K562 (cell line): ENCODE measurements at regions of chr2 and their contacts with region 1.

Region 1: DNA sequence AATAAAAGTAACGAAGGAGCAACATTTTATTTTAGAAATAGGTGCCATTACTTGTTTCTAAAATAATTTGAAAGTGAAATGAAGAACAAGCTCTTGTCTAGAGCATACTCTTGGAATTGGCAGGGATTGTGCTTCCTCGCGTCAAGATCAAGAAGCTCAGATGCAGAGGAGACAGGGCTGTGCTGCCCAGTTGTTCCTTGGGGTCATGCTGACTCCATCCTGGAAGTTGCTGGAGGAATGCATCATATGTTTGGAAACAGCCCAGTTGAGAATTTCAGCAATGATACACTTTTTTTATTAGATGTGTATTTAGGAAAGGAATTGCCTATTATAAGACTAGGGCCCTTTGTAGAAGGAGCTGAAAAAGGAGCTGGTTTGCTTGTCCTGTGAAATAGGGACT is 17.2 kb downstream of the LTBP1 start:
- DNase-seq: no peak
- ATAC-seq: no peak
- H3K4me3 ChIP-seq: no peak overlapping the region
- H3K27ac ChIP-seq: no peak overlapping the region
- H3K4me1 ChIP-seq: peaks cover 6 to 17% of the 10 kb centered on the region in 2 experiments; a peak in 4 of 5 replicates
- H3K27me3 ChIP-seq: no peaks in the 10 kb centered on the region
- CTCF ChIP-seq: no peak
- EP300 ChIP-seq: no peak
- POLR2A ChIP-seq: no peak
- RAD21 ChIP-seq: no peak

Region 2: GRCh38 chr2:33008716-33009115 is 44.8 kb after region 1 on chr2:
- CTCF ChIA-PET with region 1: no interaction called
- POLR2A ChIA-PET with region 1: no interaction called
- in situ Hi-C with region 1: no loop called
- intact Hi-C with region 1: loop called (anchors 1 kb)
- DNase-seq: no peak
- ATAC-seq: peak; percentile 32
- H3K4me3 ChIP-seq: no peak overlapping the region
- H3K27ac ChIP-seq: no peak overlapping the region
- H3K4me1 ChIP-seq: no peaks in the 10 kb centered on the region; a peak in 3 of 5 replicates
- H3K27me3 ChIP-seq: no peaks in the 10 kb centered on the region; a peak in 1 of 5 replicates
- CTCF ChIP-seq: no peak
- EP300 ChIP-seq: no peak
- POLR2A ChIP-seq: no peak
- RAD21 ChIP-seq: no peak

Region 3: DNA sequence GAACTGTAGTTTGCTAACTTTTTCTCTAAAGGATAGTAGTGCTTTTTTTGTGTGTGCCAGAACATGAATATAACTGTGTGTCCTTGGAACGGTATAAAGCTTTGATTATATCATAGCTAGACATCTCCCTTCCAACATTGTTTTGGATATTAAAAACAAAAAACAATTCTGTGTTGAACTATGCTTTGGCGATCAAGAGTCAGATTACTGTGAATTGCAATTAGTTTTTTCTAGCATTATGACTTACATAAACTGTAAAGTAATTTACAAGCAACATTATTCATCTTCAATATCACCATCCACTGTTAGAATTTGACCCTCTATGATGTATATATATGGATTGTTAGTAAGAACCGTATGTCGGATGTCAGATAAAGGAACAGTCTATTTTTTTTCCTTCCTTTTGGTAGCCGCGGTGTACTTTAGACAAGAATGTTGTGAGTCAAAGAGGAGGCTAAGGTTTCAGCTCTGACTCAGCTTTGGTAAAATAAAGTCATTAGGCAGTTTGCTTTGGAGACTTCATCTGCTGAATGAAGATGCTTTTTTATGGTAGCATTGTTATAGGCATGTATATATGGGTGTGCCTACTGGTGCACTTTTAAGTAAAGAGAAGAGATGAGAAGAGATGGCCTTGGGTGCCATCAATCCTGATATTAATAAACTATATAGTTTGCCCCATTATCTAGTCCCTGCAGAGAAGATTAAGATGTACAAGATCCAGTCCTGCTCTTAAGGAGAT is 59.2 kb after region 1 on chr2:
- CTCF ChIA-PET with region 1: no interaction called
- POLR2A ChIA-PET with region 1: no interaction called
- in situ Hi-C with region 1: no loop called
- intact Hi-C with region 1: loop called (anchors 5 kb)
- DNase-seq: peak; percentile 29 to 77 (median 46)
- ATAC-seq: peak; percentile 71
- H3K4me3 ChIP-seq: no peak overlapping the region
- H3K27ac ChIP-seq: peak overlapping the region; percentile 76
- H3K4me1 ChIP-seq: peaks cover 10 to 45% of the 10 kb centered on the region in 2 experiments; a peak in 4 of 5 replicates
- H3K27me3 ChIP-seq: no peaks in the 10 kb centered on the region
- CTCF ChIP-seq: no peak
- EP300 ChIP-seq: peak; percentile 69; the same call in 1 of the 2 replicates
- POLR2A ChIP-seq: no peak
- RAD21 ChIP-seq: no peak